ENCODE measurements at regions of chr4 and their contacts with region 1.

Region 1: GRCh38 chr4:101135371-101136010 is 211.8 kb downstream of the PPP3CA start:
- DNase-seq: no peak
- H3K4me3 ChIP-seq: no peak overlapping the region
- H3K27ac ChIP-seq: no peak overlapping the region
- H3K4me1 ChIP-seq: no peaks in the 10 kb centered on the region
- H3K27me3 ChIP-seq: no peaks in the 10 kb centered on the region
- CTCF ChIP-seq: no peak

Region 2: DNA sequence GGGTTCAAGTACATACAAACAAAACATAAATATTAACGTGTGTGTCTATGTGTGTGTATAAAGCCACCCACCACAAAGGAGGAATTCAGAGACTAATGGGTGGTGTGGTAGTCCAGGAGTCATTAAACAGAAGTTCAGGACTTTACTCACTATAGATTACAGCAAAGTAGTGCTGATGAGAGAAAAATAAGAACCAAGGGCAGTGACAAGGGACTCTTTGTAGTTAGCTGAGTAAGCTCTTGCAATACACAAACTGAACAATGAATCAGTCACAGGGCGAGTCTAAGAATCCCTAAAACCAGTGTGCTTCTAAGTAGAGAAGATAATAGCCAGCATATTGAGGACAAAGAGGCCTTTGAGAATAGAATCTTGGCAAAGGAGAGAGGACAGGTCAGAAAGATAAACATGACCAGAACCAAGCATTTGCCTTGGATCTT is 20.5 kb before region 1 on chr4:
- CTCF ChIA-PET with region 1: no interaction called
- dilution Hi-C with region 1: no loop called
- in situ Hi-C with region 1: no loop called
- intact Hi-C with region 1: loop called (anchors 1 kb)
- DNase-seq: peak; percentile 96
- H3K4me3 ChIP-seq: no peak overlapping the region
- H3K27ac ChIP-seq: peak overlapping the region; percentile 71
- H3K4me1 ChIP-seq: peaks cover 8% of the 10 kb centered on the region
- H3K27me3 ChIP-seq: no peaks in the 10 kb centered on the region
- CTCF ChIP-seq: no peak

Region 3: GRCh38 chr4:101169044-101170014 is 33.8 kb after region 1 on chr4:
- CTCF ChIA-PET with region 1: no interaction called
- dilution Hi-C with region 1: no loop called
- in situ Hi-C with region 1: no loop called
- intact Hi-C with region 1: no loop called
- DNase-seq: peak; percentile 58
- H3K4me3 ChIP-seq: no peak overlapping the region
- H3K27ac ChIP-seq: no peak overlapping the region
- H3K4me1 ChIP-seq: peaks cover 28% of the 10 kb centered on the region
- H3K27me3 ChIP-seq: no peaks in the 10 kb centered on the region
- CTCF ChIP-seq: peak; percentile 80 to 83